ENCODE measurements at regions of chr4 and their contacts with region 1.

Region 1: DNA sequence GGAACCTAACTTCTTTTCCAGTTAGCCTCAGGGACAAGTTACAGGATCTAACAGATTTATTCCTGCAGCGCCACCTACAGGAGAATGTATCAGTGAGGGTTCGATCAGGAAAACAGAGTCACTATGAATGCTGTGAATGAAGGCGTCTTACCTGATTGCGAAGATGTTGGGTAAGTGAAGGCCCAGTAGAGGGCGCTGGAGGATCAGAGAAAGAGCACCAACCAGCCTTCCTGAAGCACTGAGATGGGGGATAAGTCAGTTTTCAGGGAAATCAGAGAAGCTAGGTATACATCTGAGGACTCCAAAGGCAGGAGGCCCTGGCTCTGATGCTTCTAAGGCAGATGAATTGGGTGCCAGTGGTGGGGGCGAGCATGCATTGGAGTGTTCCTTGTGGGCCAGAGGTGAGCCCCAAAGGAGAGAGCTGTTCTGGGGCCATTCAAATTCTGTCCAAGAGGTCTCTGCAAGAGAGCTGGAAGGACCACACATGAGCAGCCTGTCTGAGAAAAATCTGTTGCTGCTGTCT is 169.9 kb upstream of the AADAT start:
- DNase-seq: peak in 1 of 9 donors; percentile 37
- ATAC-seq: peak; percentile 53
- H3K4me3 ChIP-seq: no peak overlapping the region
- H3K4me3 Mint-ChIP-seq: no peak overlapping the region
- H3K27ac ChIP-seq: no peak overlapping the region
- H3K27ac Mint-ChIP-seq: no peak overlapping the region
- H3K4me1 ChIP-seq: no peaks in the 10 kb centered on the region
- H3K4me1 Mint-ChIP-seq: no peaks in the 10 kb centered on the region
- H3K27me3 ChIP-seq: no peaks in the 10 kb centered on the region
- H3K27me3 Mint-ChIP-seq: peaks cover 0 to 6% (median 0%) of the 10 kb centered on the region in 5 donors

Region 2: GRCh38 chr4:170138580-170139194 is 121.0 kb before region 1 on chr4:
- CTCF ChIA-PET with region 1: no interaction called
- POLR2A ChIA-PET with region 1: no interaction called
- intact Hi-C with region 1: loop called in 1 of 2 experiments (anchors 1 kb)
- DNase-seq: peak; percentile 2 to 58 (median 41)
- ATAC-seq: peak; percentile 67
- H3K4me3 ChIP-seq: no peak overlapping the region
- H3K4me3 Mint-ChIP-seq: no peak overlapping the region
- H3K27ac ChIP-seq: no peak overlapping the region
- H3K27ac Mint-ChIP-seq: no peak overlapping the region
- H3K4me1 ChIP-seq: no peaks in the 10 kb centered on the region
- H3K4me1 Mint-ChIP-seq: peaks cover 0 to 7% (median 5%) of the 10 kb centered on the region in 7 donors
- H3K27me3 ChIP-seq: no peaks in the 10 kb centered on the region
- H3K27me3 Mint-ChIP-seq: peaks cover 0 to 7% (median 0%) of the 10 kb centered on the region in 5 donors

Region 3: DNA sequence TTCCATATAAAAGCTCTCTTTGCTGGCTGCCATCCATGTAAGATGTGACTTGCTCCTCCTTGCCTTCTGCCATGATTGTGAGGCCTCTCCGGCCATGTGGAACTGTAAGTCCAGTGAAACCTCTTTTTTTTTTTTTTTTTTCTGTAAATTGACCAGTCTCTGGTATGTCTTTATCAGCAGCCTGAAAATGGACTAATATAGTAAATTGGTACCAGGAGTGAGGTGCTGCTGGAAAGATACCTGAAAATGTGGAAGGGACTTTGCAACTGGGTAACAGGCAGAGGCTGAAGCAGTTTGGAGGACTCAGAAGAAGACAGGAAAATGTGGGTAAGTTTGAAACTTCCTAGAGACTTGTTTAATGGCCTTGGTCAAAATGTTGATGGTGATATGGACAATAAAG is 45.6 kb before region 1 on chr4:
- CTCF ChIA-PET with region 1: no interaction called
- POLR2A ChIA-PET with region 1: no interaction called
- intact Hi-C with region 1: loop called in 1 of 2 experiments (anchors 1 kb)
- DNase-seq: no peak
- ATAC-seq: no peak
- H3K4me3 ChIP-seq: no peak overlapping the region
- H3K4me3 Mint-ChIP-seq: no peak overlapping the region
- H3K27ac ChIP-seq: no peak overlapping the region
- H3K27ac Mint-ChIP-seq: no peak overlapping the region
- H3K4me1 ChIP-seq: no peaks in the 10 kb centered on the region
- H3K4me1 Mint-ChIP-seq: no peaks in the 10 kb centered on the region
- H3K27me3 ChIP-seq: no peaks in the 10 kb centered on the region
- H3K27me3 Mint-ChIP-seq: no peaks in the 10 kb centered on the region